ENCODE measurements at regions of chr6 and their contacts with region 1.

Region 1: DNA sequence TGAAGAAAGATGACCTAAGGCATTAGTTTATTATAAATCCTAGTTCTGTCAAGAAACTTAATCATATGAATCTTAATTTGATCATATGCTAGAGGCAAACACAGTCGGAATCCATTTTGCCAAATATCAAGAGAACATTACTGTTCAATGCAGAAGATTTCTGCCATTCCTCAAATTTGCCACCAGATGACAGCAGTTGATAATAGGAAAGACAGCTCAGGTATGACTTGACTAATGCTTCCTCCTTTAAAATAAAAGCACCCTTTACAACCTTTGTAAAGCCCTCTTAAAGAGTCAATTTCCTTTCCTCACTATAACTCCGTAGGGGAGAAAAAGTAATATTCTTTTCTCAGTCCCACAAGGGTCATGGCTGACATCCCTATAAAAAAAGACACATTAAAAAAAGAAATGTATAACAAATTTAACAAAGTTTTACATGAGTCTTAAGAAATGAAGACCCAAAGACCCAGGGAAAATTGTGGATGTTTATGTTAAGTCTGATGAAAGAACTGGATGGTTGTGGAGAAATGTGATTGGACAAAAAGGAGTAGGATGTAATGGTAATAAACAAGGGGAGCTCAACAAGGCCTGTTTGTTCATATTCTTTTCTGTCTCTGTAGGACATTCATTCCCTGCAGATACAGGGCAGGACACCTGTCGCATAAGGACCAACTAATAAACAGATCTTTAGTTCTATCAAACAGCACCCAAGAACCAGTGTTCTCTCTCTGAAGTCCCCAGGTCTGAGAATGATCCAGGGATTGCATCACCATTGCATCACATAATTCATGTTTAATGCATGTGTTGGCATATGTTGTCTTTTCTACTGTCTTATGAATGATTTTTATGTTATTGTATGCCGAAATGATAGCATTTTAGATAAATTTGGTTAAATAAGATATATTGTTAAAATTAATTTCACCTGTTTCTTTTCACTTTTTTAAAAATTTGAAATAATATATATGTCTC is 23.0 kb upstream of the IL17A start:
- DNase-seq: no peak
- ATAC-seq: peak; percentile 27
- H3K4me3 Mint-ChIP-seq: no peak overlapping the region
- H3K27ac Mint-ChIP-seq: peak overlapping the region; percentile 88
- H3K4me1 Mint-ChIP-seq: peaks cover 58% of the 10 kb centered on the region
- H3K27me3 Mint-ChIP-seq: peaks cover 14% of the 10 kb centered on the region

Region 2: DNA sequence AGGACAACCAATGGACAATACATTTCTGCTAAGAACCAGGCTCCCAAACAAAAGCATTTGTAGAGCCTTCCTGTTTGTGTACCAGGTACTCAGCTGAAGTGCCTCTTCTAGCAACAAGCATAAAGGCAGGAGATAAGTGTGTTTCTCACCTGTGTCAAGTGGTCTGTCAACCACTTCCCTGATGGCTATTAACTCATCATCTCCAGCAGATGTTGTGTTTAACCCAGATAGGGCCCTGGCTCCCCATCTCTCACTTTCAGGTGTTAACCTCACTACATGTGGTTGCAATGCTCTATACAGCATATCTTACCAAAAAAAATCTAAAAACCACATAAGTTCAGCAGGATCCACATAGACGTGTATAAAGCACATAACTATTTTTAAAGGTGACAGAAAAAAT is 13.3 kb after region 1 on chr6:
- CTCF ChIA-PET with region 1: interaction called, 12 read pairs
- POLR2A ChIA-PET with region 1: interaction called, 4 read pairs
- intact Hi-C with region 1: no loop called
- DNase-seq: no peak
- ATAC-seq: peak; percentile 60
- H3K4me3 Mint-ChIP-seq: no peak overlapping the region
- H3K27ac Mint-ChIP-seq: no peak overlapping the region
- H3K4me1 Mint-ChIP-seq: peaks cover 19% of the 10 kb centered on the region
- H3K27me3 Mint-ChIP-seq: no peaks in the 10 kb centered on the region

Region 3: DNA sequence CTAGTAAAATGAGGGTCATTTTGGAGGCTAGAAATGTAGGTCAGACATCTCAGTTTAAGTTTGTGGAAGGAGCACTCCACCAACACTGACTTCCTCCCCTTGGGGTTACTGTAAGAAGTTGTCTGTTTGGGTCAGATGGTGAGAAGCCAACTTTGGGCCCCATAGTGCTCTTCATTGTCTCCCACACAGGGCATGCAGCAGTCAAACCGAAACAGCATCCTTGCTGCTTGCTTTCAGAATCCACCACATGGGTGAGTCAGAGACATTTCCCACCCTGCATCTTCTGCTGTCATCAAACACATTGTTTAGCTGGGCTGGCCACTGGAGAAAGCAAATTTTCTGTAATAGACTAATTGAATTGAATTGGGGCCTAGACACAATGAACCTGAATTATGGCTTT is 64.3 kb after region 1 on chr6:
- CTCF ChIA-PET with region 1: interaction called, 33 read pairs
- POLR2A ChIA-PET with region 1: no interaction called
- intact Hi-C with region 1: loop called (anchors 1 kb)
- DNase-seq: peak; percentile 88
- ATAC-seq: peak; percentile 95
- H3K4me3 Mint-ChIP-seq: no peak overlapping the region
- H3K27ac Mint-ChIP-seq: no peak overlapping the region
- H3K4me1 Mint-ChIP-seq: peaks cover 35% of the 10 kb centered on the region
- H3K27me3 Mint-ChIP-seq: peaks cover 41% of the 10 kb centered on the region

Region 4: DNA sequence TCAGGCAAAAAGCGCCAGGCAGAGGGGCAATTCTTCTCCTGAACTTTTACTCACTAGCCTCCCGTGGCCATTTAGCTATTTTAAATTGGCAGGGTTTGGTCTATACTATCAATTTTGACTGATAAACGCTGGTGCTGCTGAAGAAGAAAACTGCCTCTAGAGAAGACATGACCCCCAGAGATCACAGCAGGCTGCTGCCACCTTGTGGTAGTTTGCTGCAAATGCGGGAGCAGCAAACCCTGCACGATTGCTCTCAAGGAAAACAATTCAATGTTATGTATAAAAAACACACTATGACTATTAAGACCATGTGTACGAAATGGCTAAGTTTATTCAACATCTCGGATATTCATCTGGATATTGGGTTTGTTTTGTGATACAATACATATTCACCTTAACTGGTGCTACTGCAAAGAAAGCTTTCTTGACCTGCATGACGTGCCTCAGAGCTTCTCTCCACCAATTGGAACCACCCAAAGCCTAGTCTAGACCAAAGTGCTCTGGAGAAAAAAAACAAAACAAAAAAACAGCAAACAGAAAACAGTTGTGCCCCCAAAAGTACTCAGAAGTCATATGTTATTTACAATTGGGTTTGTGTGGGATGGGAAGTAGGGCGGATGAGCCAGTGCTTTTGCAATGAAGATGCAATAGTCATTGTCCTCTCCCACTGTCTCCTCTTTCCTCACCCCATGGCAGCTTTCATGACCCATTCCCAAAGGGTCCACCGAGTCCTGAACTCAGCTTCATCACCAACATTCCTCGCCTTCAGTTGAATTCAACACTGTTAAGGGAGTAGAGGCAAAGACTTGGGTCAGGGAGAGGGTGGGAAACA is 100.7 kb after region 1 on chr6:
- CTCF ChIA-PET with region 1: interaction called, 106 read pairs
- POLR2A ChIA-PET with region 1: interaction called, 4 read pairs
- intact Hi-C with region 1: loop called (anchors 1 kb)
- DNase-seq: peak; percentile 84
- ATAC-seq: peak; percentile 84
- H3K4me3 Mint-ChIP-seq: no peak overlapping the region
- H3K27ac Mint-ChIP-seq: peak overlapping the region; percentile 42
- H3K4me1 Mint-ChIP-seq: peaks cover 12% of the 10 kb centered on the region
- H3K27me3 Mint-ChIP-seq: no peaks in the 10 kb centered on the region

Region 5: DNA sequence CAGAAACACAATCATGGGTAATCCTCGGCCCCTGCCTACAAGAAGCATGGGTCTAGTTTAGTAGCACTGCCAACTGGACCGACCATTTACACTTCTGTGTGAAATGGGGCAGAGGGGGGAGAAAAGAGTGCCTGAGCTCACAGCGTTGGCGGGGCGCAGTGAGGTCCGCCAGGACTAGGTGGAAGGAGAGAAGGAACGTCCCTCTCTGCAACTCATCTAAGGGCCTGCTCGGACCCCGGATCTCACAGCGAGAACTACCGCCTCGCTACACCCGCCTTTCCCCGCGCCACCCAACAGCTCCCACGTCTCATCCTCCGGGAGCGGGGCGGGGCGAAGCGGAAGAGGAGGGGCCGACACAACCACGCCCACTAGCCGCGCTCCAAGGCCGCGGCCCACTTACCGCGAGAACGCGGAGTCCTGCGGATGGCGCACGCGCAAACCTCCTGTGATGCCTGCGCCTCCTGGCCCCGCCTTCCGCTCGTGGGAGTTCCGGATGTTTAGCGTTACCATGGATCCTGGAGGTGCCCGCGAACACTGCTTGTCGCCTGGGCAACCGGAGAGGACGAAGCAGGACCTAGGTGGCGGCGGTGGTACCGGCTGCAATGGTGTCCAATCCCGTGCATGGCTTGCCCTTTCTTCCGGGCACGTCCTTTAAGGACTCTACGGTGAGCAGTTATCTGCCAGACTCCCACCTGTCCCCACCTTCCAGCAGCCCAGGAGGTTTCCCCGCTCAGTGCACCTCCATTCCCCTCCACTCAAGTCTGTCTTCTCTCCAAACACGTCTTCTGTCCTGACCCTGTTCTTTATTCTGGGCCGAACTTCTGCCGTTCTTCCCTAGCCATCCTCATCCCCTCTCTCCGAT is 256.8 kb after region 1 on chr6 and contains the start of gene EFHC1:
- CTCF ChIA-PET with region 1: interaction called, 3 read pairs
- POLR2A ChIA-PET with region 1: no interaction called
- intact Hi-C with region 1: loop called in 1 of 2 experiments (anchors 1 kb)
- DNase-seq: peak; percentile 99
- ATAC-seq: peak; percentile 94
- H3K4me3 Mint-ChIP-seq: no peak within 1 kb of the TSS
- H3K27ac Mint-ChIP-seq: peak within 1 kb of the TSS; percentile 82
- H3K4me1 Mint-ChIP-seq: peaks cover 22% of the 10 kb centered on the region
- H3K27me3 Mint-ChIP-seq: no peaks in the 10 kb centered on the region
- total RNA-seq, gene EFHC1: 2.2 to 3.6 TPM

Region 6: GRCh38 chr6:52664186-52664990 is 501.2 kb after region 1 on chr6:
- CTCF ChIA-PET with region 1: no interaction called
- POLR2A ChIA-PET with region 1: no interaction called
- intact Hi-C with region 1: loop called (anchors 1 to 10 kb)
- DNase-seq: peak; percentile 86
- ATAC-seq: peak; percentile 99
- H3K4me3 Mint-ChIP-seq: no peak overlapping the region
- H3K27ac Mint-ChIP-seq: no peak overlapping the region
- H3K4me1 Mint-ChIP-seq: peaks cover 11% of the 10 kb centered on the region
- H3K27me3 Mint-ChIP-seq: no peaks in the 10 kb centered on the region

Measured in activated CD4-positive, alpha-beta T cell treated with anti-CD3 and anti-CD28 coated beads for 36 hours (primary cell).